ENCODE measurements at regions of chr1 and their contacts with region 1.

Region 1: GRCh38 chr1:173507205-173507846 is 30.2 kb downstream of the PRDX6 start:
- DNase-seq: peak; percentile 100
- ATAC-seq: peak; percentile 87
- H3K4me3 ChIP-seq: peak overlapping the region; percentile 48
- H3K27ac ChIP-seq: peak overlapping the region; percentile 83
- H3K4me1 ChIP-seq: peaks cover 37% of the 10 kb centered on the region
- H3K27me3 ChIP-seq: no peaks in the 10 kb centered on the region
- CTCF ChIP-seq: no peak

Region 2: DNA sequence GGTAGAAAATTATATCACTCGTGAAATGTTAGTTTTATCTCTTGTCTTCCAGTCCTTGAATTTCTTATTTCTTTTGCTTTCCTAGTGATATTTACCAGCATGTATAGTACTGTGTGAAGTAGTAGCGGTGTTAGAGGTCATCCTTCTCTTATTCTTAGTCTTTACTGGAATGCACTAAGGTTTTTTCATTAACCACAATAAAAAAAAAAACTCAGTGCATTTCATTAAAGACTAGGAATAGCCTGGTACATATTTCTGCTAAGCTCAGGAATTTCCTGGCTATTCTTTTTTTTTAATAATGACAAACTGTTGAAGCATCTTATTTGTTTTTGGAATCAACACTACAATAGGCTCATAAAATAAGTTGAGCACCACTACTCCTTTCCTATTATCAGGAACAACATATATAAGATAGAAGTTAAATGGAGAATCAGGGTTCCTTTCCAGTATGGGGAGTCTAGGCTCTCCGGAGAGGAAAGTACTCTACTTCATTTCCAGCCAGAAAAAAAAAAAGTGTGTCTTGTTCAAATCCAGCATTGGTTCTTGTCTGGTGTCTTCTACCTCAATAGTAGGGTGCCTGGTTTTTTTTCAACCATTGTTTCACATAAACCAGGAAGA is 516.6 kb before region 1 on chr1:
- CTCF ChIA-PET with region 1: no interaction called
- POLR2A ChIA-PET with region 1: no interaction called
- intact Hi-C with region 1: no loop called
- DNase-seq: peak; percentile 76
- ATAC-seq: peak; percentile 93
- H3K4me3 ChIP-seq: no peak overlapping the region
- H3K27ac ChIP-seq: no peak overlapping the region
- H3K4me1 ChIP-seq: peaks cover 12% of the 10 kb centered on the region
- H3K27me3 ChIP-seq: no peaks in the 10 kb centered on the region
- CTCF ChIP-seq: no peak

Region 3: GRCh38 chr1:173255214-173255813 is 252.0 kb before region 1 on chr1:
- CTCF ChIA-PET with region 1: interaction called, 5 read pairs
- POLR2A ChIA-PET with region 1: no interaction called
- intact Hi-C with region 1: loop called (anchors 1 kb)
- DNase-seq: peak; percentile 90
- ATAC-seq: peak; percentile 90
- H3K4me3 ChIP-seq: no peak overlapping the region
- H3K27ac ChIP-seq: no peak overlapping the region
- H3K4me1 ChIP-seq: no peaks in the 10 kb centered on the region
- H3K27me3 ChIP-seq: no peaks in the 10 kb centered on the region
- CTCF ChIP-seq: peak; percentile 100

Region 4: GRCh38 chr1:173420330-173420806 is 87.0 kb before region 1 on chr1:
- CTCF ChIA-PET with region 1: interaction called, 6 read pairs
- POLR2A ChIA-PET with region 1: interaction called, 8 read pairs
- intact Hi-C with region 1: loop called (anchors 2 kb)
- DNase-seq: peak; percentile 100
- ATAC-seq: peak; percentile 50
- H3K4me3 ChIP-seq: peak overlapping the region; percentile 35
- H3K27ac ChIP-seq: 0 out of 2 replicates have a peak overlapping the region, but pooled peaks have one; percentile 1
- H3K4me1 ChIP-seq: peaks cover 42% of the 10 kb centered on the region
- H3K27me3 ChIP-seq: no peaks in the 10 kb centered on the region
- CTCF ChIP-seq: peak; percentile 100

Region 5: DNA sequence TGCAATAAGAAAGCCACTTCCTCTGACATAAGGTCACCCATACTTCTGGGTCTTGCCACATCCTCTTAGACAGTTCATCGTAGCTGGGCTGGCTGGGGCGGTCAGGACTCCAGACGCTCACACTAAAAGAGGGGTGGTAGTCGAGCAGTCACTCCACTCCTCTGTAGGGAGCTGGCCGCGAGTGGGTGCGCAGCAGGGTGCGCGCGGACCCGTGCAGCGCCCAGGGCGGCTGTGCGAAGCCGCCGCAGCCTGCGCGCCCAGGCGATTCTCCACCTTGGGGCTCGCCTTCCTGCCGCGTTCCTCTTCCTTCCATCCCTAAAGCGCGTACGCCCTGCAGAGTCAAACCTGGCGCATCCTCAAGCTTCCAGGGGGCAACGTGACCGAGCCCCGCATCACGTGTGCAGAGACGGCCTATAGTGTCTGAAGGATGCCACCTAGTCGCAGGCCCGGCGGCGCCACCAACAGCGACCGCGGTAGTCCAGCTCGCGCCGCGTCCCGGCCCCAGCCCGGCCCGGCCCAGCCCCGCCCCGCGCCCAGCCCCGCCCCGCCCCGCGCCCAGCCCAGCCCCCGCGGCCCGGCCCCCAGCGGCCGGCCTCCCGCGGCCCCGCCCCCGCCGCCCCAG is 30.6 kb before region 1 on chr1:
- CTCF ChIA-PET with region 1: interaction called, 13 read pairs
- POLR2A ChIA-PET with region 1: interaction called, 16 read pairs
- intact Hi-C with region 1: loop called (anchors 1 kb)
- DNase-seq: peak; percentile 100
- ATAC-seq: peak; percentile 77
- H3K4me3 ChIP-seq: peak overlapping the region; percentile 74
- H3K27ac ChIP-seq: peak overlapping the region; percentile 68
- H3K4me1 ChIP-seq: peaks cover 60% of the 10 kb centered on the region
- H3K27me3 ChIP-seq: no peaks in the 10 kb centered on the region
- CTCF ChIP-seq: no peak; the same call in 1 of the 2 replicates

Region 6: DNA sequence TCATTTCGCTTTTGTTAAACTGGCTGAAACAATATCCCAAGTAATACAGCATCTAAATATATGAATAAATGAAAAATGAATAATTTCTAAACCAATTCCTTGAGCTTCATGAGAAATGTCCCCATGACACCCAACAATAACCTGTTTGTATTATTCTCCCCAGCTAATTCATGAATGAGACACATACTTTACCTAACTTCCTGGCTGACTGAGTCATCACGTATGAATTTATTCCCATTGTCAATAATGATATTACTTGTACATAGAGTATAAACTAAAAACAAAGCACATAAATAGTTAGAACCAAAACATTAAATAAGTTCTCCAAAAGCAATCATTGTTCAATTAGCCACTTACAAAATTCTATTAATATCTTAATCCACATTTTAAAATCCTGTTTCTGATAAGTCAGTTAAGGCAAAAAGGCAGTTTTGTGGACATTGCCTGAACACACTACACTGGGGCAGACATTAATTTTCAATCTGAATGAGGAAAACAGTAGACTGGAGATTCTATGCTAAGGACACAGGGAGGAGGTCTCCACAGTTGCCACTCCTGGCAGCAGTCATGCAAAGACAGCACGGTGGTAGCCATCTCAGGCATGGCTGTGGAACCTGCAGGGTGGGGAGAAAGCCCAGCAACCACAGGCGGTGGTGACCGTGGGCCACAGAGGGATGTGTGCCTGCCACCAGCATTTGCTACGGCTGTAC is 47.4 kb after region 1 on chr1:
- CTCF ChIA-PET with region 1: interaction called, 8 read pairs
- POLR2A ChIA-PET with region 1: interaction called, 7 read pairs
- intact Hi-C with region 1: loop called (anchors 1 kb)
- DNase-seq: peak; percentile 98
- ATAC-seq: peak; percentile 98
- H3K4me3 ChIP-seq: 0 out of 2 replicates have a peak overlapping the region, but pooled peaks have one; percentile 1
- H3K27ac ChIP-seq: peak overlapping the region; percentile 69
- H3K4me1 ChIP-seq: peaks cover 26% of the 10 kb centered on the region
- H3K27me3 ChIP-seq: no peaks in the 10 kb centered on the region
- CTCF ChIP-seq: no peak

Region 7: DNA sequence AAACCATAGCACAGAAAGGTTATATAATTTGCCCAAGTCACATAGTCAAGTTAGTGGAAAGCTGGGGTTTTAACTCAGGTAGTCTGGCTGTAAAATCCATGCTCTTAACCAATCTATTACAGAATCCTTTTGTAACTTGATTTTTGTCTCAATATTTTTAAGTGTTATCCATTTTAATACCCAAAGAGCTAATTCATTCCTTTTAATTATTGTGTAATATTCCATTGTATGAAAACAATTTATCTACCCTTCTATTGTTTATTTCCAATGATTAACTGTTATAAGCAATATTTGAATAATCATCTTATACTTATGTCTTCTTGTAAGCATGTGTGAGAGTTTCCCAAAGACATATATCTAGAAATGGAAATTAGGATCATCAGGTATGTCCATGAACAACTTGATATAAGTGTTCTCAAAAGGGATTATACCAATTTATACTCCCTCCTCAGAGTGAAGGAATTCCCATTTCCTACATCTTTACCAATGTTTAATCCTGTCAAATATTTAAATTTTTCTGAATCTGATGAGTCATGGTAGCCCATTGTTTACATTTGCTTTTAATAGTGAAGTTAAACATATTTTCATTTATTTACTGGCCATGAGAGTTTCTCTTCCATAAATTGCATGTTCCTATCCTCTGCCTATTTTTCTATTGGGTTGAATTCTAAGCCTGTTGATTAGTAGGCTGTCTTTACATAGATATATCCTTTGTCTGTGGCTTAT is 141.7 kb after region 1 on chr1:
- CTCF ChIA-PET with region 1: no interaction called
- POLR2A ChIA-PET with region 1: interaction called, 5 read pairs
- intact Hi-C with region 1: loop called (anchors 1 kb)
- DNase-seq: peak; percentile 97
- ATAC-seq: peak; percentile 97
- H3K4me3 ChIP-seq: no peak overlapping the region
- H3K27ac ChIP-seq: peak overlapping the region; percentile 3
- H3K4me1 ChIP-seq: peaks cover 24% of the 10 kb centered on the region
- H3K27me3 ChIP-seq: no peaks in the 10 kb centered on the region
- CTCF ChIP-seq: no peak

Region 8: GRCh38 chr1:173714759-173715537 is 207.6 kb after region 1 on chr1 and contains the start of gene KLHL20:
- CTCF ChIA-PET with region 1: interaction called, 3 read pairs
- POLR2A ChIA-PET with region 1: interaction called, 14 read pairs
- intact Hi-C with region 1: loop called (anchors 1 kb)
- DNase-seq: peak; percentile 100
- ATAC-seq: peak; percentile 97
- H3K4me3 ChIP-seq: peak within 1 kb of the TSS; percentile 72
- H3K27ac ChIP-seq: peak within 1 kb of the TSS; percentile 33
- H3K4me1 ChIP-seq: peaks cover 20% of the 10 kb centered on the region
- H3K27me3 ChIP-seq: no peaks in the 10 kb centered on the region
- CTCF ChIP-seq: peak; percentile 49
- total RNA-seq, gene KLHL20: 46.2 and 46.4 TPM in 2 replicates

Measured in PC-3 (cell line).